Activated T-helper 1 cell treated with anti-CD3 and anti-CD28 coated beads, Interleukin-12 subunit alpha, Interleukin-12 subunit beta, Interleukin-2, Interleukin-4 antibody, amounts not matched to agents 30 ng/mL and 10 ng/mL and 1 ng/mL, durations not matched to agents 14 hours and 24 hours and 36 hours (primary cell): ENCODE measurements at regions of chr11 and their contacts with region 1.

Region 1: GRCh38 chr11:57741132-57742086 is at the start of gene SELENOH:
- DNase-seq: peak; percentile 93
- H3K4me3 Mint-ChIP-seq: peak within 1 kb of the TSS; percentile 98
- H3K27ac Mint-ChIP-seq: peak within 1 kb of the TSS; percentile 95
- H3K4me1 Mint-ChIP-seq: peaks cover 46% of the 10 kb centered on the region
- H3K27me3 Mint-ChIP-seq: no peaks in the 10 kb centered on the region
- total RNA-seq, gene SELENOH: 211 and 232 TPM in 2 replicates

Region 2: DNA sequence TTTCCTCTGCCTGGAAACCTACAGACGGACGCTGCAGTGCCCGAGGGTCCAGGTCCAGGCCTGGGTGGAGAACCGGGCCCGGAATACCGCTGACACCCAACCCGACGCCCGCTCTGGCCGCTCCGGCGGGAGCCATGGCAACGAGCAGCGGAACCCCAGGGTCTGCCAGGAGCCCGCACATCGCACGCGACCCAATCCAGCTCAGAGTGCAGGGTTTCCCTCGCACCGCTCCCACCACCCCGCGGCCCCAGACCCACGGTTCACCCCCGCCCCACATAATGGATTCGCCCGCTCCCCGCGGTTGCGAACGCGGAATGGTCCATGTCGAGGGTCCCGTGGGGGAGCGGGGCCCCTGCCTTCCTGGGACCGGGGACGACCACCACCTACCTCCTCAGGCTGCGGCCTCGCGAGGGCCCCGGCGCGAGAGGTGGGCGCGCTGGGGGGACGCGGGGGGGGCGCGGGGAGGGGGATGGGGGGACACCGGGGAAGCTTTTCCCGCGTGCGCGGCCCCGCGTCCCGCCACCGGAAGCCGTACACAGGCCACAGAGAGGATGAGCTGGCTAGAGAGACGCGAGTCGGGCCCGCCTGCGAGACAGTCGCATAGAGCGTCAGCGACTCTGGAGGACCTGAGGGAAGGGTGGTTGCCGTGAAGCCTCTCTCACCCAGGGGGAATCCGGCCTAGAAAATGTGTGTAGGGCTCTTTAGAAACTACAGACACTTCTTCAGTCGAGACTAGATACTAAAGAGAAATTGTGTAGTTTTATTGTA is 405.9 kb before region 1 on chr11 and contains the start of gene SSRP1:
- intact Hi-C with region 1: loop called (anchors 1 kb)
- DNase-seq: peak; percentile 81
- H3K4me3 Mint-ChIP-seq: peak within 1 kb of the TSS; percentile 92
- H3K27ac Mint-ChIP-seq: peak within 1 kb of the TSS; percentile 99
- H3K4me1 Mint-ChIP-seq: peaks cover 39% of the 10 kb centered on the region
- H3K27me3 Mint-ChIP-seq: peaks cover 1% of the 10 kb centered on the region
- total RNA-seq, gene SSRP1: 235 and 239 TPM in 2 replicates

Region 3: DNA sequence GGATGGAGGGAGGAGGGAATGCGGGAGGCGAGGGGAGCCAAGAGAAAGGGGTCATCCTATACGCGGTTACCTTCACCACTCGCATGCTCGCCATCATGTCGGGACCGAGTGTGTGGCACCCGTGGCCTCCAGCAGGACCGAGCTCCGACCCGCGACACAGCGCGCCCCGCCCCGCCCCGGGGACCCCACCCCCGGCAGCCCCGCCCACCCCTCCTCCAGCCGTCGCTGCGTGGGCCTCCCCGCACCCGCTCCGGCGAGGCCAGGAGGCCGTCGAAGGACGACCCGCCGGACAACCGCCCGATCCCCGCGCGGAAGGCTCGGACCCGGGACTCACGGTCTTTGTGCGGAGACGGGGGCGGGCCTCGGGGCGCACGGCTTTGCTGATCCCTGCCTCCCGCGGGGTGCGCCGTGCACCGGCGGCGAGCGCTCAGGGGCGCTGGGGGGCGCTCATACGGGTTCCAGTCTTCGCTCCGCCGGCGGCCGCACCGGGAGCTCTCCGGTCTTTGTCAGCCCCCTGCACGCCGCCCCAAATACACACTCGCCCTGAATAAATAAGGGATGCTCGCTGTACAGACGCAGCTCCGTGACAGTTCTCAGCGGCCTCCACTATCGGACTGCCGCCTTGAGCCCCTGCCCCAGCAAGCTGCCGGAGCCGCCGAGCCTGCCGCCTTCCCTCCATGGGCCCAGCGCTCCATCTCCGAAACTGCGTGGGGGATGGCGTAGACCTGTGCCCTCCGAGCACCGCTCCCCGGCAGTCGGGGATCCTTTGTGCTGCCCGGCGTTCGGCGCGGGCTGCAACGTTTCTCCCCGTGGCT is 173.7 kb before region 1 on chr11 and contains the start of gene UBE2L6:
- intact Hi-C with region 1: loop called (anchors 1 kb)
- DNase-seq: peak; percentile 53
- H3K4me3 Mint-ChIP-seq: peak within 1 kb of the TSS; percentile 99
- H3K27ac Mint-ChIP-seq: peak within 1 kb of the TSS; percentile 97
- H3K4me1 Mint-ChIP-seq: peaks cover 41% of the 10 kb centered on the region
- H3K27me3 Mint-ChIP-seq: no peaks in the 10 kb centered on the region
- total RNA-seq, gene UBE2L6: 155 and 163 TPM in 2 replicates

Region 4: GRCh38 chr11:57667736-57668435 is 73.5 kb before region 1 on chr11 and contains the start of gene ZDHHC5:
- intact Hi-C with region 1: loop called (anchors 1 kb)
- DNase-seq: peak; percentile 99
- H3K4me3 Mint-ChIP-seq: peak within 1 kb of the TSS; percentile 99
- H3K27ac Mint-ChIP-seq: peak within 1 kb of the TSS; percentile 97
- H3K4me1 Mint-ChIP-seq: peaks cover 31% of the 10 kb centered on the region
- H3K27me3 Mint-ChIP-seq: no peaks in the 10 kb centered on the region
- total RNA-seq, gene ZDHHC5: 78.4 and 79.1 TPM in 2 replicates

Region 5: GRCh38 chr11:57761301-57762234 is 20.2 kb after region 1 on chr11 and contains the start of gene CTNND1:
- intact Hi-C with region 1: loop called (anchors 2 kb)
- DNase-seq: no peak
- H3K4me3 Mint-ChIP-seq: peak within 1 kb of the TSS; percentile 57
- H3K27ac Mint-ChIP-seq: no peak within 1 kb of the TSS
- H3K4me1 Mint-ChIP-seq: peaks cover 37% of the 10 kb centered on the region
- H3K27me3 Mint-ChIP-seq: peaks cover 4% of the 10 kb centered on the region
- total RNA-seq, gene CTNND1: 6.4 and 9.9 TPM in 2 replicates

Region 6: GRCh38 chr11:57800444-57801182 is 59.2 kb after region 1 on chr11:
- intact Hi-C with region 1: loop called (anchors 1 kb)
- DNase-seq: peak; percentile 13
- H3K4me3 Mint-ChIP-seq: no peak overlapping the region
- H3K27ac Mint-ChIP-seq: peak overlapping the region; percentile 26
- H3K4me1 Mint-ChIP-seq: peaks cover 23% of the 10 kb centered on the region
- H3K27me3 Mint-ChIP-seq: no peaks in the 10 kb centered on the region

Region 7: GRCh38 chr11:59142530-59143507 is 1401.4 kb after region 1 on chr11 and contains the start of gene FAM111A:
- intact Hi-C with region 1: loop called (anchors 1 kb)
- DNase-seq: peak; percentile 88
- H3K4me3 Mint-ChIP-seq: peak within 1 kb of the TSS; percentile 91
- H3K27ac Mint-ChIP-seq: peak within 1 kb of the TSS; percentile 93
- H3K4me1 Mint-ChIP-seq: peaks cover 62% of the 10 kb centered on the region
- H3K27me3 Mint-ChIP-seq: no peaks in the 10 kb centered on the region
- total RNA-seq, gene FAM111A: 64.8 and 66.4 TPM in 2 replicates